ENCODE measurements at regions of chr2 and their contacts with region 1.

Region 1: GRCh38 chr2:160252278-160252887 is 52.3 kb upstream of the ITGB6 start:
- DNase-seq: peak in 2 of 9 experiments; percentile 36 to 46
- ATAC-seq: no peak
- H3K4me3 ChIP-seq: no peak overlapping the region
- H3K4me3 Mint-ChIP-seq: no peak overlapping the region
- H3K27ac ChIP-seq: no peak overlapping the region
- H3K27ac Mint-ChIP-seq: no peak overlapping the region
- H3K4me1 ChIP-seq: no peaks in the 10 kb centered on the region
- H3K4me1 Mint-ChIP-seq: no peaks in the 10 kb centered on the region
- H3K27me3 ChIP-seq: peaks cover 0 to 3% of the 10 kb centered on the region in 2 experiments
- H3K27me3 Mint-ChIP-seq: peaks cover 4% of the 10 kb centered on the region
- CTCF ChIP-seq: peak; percentile 98

Region 2: DNA sequence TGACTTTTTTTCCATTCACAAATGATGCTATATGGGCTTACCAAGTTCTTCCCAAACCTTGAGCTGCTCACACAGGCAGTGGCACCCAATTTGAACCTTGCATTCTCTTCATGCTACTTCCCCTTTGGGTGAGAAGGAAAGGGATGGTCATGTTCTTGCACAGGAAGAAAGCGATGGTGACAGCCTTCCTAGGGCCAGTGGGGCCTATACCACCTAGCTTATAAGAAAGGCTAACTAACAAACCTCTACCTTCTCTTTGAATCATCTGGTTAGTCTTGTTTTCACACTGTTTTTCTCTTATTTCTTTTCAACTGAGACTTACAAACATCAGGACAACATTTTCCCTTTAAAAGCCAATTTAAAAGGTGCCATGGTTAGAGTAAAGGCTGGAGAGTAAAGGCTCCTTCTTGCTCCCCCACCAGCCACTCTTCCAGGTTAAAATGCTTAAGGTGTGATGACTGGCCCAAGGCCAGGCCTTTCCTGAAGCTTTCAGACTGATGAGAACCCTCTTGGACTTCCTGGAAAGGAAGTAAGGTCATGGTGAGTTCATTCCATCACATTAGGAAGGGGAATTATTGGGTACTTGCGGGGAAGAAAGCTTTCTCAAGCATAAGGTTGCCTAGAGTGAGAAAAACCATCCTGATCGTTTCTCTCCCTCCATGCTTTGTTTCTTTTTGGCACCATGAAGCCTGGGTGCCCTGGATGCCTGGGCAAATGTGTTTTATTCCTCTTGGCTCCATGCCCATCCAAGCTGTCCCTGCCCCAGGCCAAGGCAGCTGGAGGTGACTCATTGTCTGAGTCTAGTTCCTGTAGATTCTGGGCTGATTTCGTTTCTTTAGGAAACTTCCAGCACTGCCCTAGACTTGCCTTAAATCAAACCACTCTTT is 10.9 kb before region 1 on chr2:
- CTCF ChIA-PET with region 1: interaction called, 16 read pairs
- POLR2A ChIA-PET with region 1: no interaction called
- intact Hi-C with region 1: no loop called
- DNase-seq: no peak
- ATAC-seq: no peak
- H3K4me3 ChIP-seq: no peak overlapping the region
- H3K4me3 Mint-ChIP-seq: no peak overlapping the region
- H3K27ac ChIP-seq: no peak overlapping the region
- H3K27ac Mint-ChIP-seq: no peak overlapping the region
- H3K4me1 ChIP-seq: no peaks in the 10 kb centered on the region
- H3K4me1 Mint-ChIP-seq: no peaks in the 10 kb centered on the region
- H3K27me3 ChIP-seq: no peaks in the 10 kb centered on the region
- H3K27me3 Mint-ChIP-seq: no peaks in the 10 kb centered on the region
- CTCF ChIP-seq: no peak

Region 3: GRCh38 chr2:160269803-160270570 is 17.6 kb after region 1 on chr2:
- CTCF ChIA-PET with region 1: interaction called, 12 read pairs
- POLR2A ChIA-PET with region 1: no interaction called
- intact Hi-C with region 1: loop called in 1 of 2 experiments (anchors 1 kb)
- DNase-seq: peak; percentile 37 to 85 (median 67)
- ATAC-seq: peak; percentile 88
- H3K4me3 ChIP-seq: peak overlapping the region; percentile 57 to 75
- H3K4me3 Mint-ChIP-seq: peak overlapping the region; percentile 87
- H3K27ac ChIP-seq: peak overlapping the region; percentile 48 to 65
- H3K27ac Mint-ChIP-seq: peak overlapping the region; percentile 94
- H3K4me1 ChIP-seq: peaks cover 17% of the 10 kb centered on the region
- H3K4me1 Mint-ChIP-seq: peaks cover 28% of the 10 kb centered on the region
- H3K27me3 ChIP-seq: no peaks in the 10 kb centered on the region
- H3K27me3 Mint-ChIP-seq: no peaks in the 10 kb centered on the region
- CTCF ChIP-seq: peak; percentile 70

Region 4: DNA sequence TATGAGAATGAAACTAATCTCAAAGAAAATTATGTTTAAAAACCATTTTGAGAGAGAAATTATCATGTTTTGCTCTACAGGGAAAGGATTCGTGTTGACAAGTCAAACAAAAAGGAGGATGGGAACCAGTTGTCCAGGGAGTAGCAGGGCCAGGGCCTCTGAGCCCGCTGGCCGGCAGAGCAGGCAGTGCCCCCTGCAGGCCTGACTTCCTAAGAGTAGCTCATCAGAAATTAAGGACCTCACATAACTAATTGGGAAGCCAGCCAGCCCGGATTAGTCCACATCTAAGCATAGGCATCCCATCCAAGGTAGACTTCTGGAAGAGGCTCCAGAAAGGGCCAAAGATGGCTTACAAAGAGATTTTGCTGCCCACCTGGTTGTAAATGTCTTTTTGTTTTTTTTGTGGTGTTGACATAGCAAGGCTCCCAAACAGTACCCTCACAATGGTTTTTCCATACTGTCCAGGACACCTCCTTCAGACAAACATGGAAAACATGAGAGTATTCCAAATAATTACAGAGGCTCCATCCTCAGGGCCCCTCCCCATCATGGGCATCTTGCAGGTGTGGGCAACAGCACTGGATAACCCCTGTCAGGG is 666.6 kb after region 1 on chr2:
- CTCF ChIA-PET with region 1: interaction called, 6 read pairs
- POLR2A ChIA-PET with region 1: no interaction called
- intact Hi-C with region 1: loop called in 1 of 2 experiments (anchors 1 kb)
- DNase-seq: peak in 6 of 9 experiments; percentile 10 to 56 (median 36)
- ATAC-seq: no peak
- H3K4me3 ChIP-seq: no peak overlapping the region
- H3K4me3 Mint-ChIP-seq: no peak overlapping the region
- H3K27ac ChIP-seq: no peak overlapping the region
- H3K27ac Mint-ChIP-seq: no peak overlapping the region
- H3K4me1 ChIP-seq: no peaks in the 10 kb centered on the region
- H3K4me1 Mint-ChIP-seq: no peaks in the 10 kb centered on the region
- H3K27me3 ChIP-seq: no peaks in the 10 kb centered on the region
- H3K27me3 Mint-ChIP-seq: no peaks in the 10 kb centered on the region
- CTCF ChIP-seq: peak; percentile 14

Region 5: GRCh38 chr2:160970052-160970965 is 717.9 kb after region 1 on chr2:
- CTCF ChIA-PET with region 1: interaction called, 15 read pairs
- POLR2A ChIA-PET with region 1: no interaction called
- intact Hi-C with region 1: no loop called
- DNase-seq: peak in 2 of 9 experiments; percentile 35 to 41
- ATAC-seq: no peak
- H3K4me3 ChIP-seq: no peak overlapping the region
- H3K4me3 Mint-ChIP-seq: no peak overlapping the region
- H3K27ac ChIP-seq: no peak overlapping the region
- H3K27ac Mint-ChIP-seq: no peak overlapping the region
- H3K4me1 ChIP-seq: no peaks in the 10 kb centered on the region
- H3K4me1 Mint-ChIP-seq: no peaks in the 10 kb centered on the region
- H3K27me3 ChIP-seq: no peaks in the 10 kb centered on the region
- H3K27me3 Mint-ChIP-seq: no peaks in the 10 kb centered on the region
- CTCF ChIP-seq: peak; percentile 40

Region 6: DNA sequence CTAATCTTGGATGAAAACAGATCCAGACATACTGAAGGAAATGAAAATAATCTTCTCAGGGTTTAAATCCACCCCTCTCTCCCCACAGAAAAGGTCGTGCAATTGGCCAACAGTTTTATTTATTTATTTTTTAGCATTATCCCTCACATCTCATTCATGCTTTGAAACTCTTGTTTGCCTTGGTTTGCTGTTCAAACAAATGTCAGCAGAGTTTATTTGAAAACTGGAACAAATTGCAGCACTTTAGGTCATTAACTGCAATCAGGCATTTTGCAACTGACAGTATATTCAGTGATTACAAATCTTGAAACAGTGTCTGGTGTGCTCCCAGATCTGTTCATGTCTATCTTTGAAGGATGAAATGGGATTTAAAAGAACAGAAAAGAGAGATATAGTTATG is 1592.5 kb after region 1 on chr2:
- CTCF ChIA-PET with region 1: no interaction called
- POLR2A ChIA-PET with region 1: no interaction called
- intact Hi-C with region 1: no loop called
- DNase-seq: no peak
- ATAC-seq: no peak
- H3K4me3 ChIP-seq: no peak overlapping the region
- H3K4me3 Mint-ChIP-seq: no peak overlapping the region
- H3K27ac ChIP-seq: no peak overlapping the region
- H3K27ac Mint-ChIP-seq: no peak overlapping the region
- H3K4me1 ChIP-seq: no peaks in the 10 kb centered on the region
- H3K4me1 Mint-ChIP-seq: no peaks in the 10 kb centered on the region
- H3K27me3 ChIP-seq: no peaks in the 10 kb centered on the region
- H3K27me3 Mint-ChIP-seq: no peaks in the 10 kb centered on the region
- CTCF ChIP-seq: no peak